Heart left ventricle (tissue), 16 donors: ENCODE measurements at regions of chr3 and their contacts with region 1.

Region 1: DNA sequence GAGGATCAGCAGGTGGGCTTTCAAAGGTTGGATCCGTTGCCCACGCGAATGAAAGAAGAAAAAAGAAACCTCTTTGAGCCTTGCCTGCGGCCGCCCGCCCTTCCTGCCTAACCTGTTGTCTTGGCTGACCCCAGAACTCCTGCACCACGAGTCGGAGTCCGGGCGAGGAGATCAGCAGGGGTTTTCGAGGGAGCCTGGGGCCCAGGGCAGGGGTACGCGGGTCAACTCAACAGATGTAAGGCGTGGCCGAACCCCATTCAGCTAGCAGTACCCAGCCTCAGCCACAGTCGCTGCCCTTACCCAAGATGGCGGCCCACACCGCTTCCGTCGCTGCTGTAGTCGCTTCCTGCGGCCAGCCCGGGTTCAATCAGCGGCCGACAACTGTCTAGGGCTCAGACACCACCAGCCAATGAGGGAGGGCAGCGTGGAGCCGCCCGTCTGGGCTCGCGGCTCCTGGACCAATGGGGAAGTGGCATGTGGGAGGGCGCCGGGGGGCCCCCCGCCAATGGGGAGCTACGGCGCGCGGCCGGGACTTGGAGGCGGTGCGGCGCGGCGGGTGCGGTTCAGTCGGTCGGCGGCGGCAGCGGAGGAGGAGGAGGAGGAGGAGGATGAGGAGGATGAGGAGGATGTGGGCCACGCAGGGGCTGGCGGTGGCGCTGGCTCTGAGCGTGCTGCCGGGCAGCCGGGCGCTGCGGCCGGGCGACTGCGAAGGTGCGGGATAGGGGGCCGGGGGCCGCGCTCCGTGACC is at the start of gene MANF:
- DNase-seq: peak; percentile 98 to 99 (median 99)
- ATAC-seq: peak; percentile 98 to 99 (median 98)
- H3K4me3 ChIP-seq: peak within 1 kb of the TSS; percentile 76 to 97 (median 82)
- H3K27ac ChIP-seq: peak within 1 kb of the TSS; percentile 84 to 97 (median 94)
- H3K4me1 ChIP-seq: peaks cover 12 to 51% (median 37%) of the 10 kb centered on the region in 12 donors
- H3K27me3 ChIP-seq: no peaks in the 10 kb centered on the region
- CTCF ChIP-seq: peak in 3 of 12 donors; percentile 7 to 13 (median 12)
- POLR2A ChIP-seq: peak; percentile 77 to 97
- total RNA-seq, gene MANF: 22.3 to 87.2 (median 47.5) TPM

Region 2: DNA sequence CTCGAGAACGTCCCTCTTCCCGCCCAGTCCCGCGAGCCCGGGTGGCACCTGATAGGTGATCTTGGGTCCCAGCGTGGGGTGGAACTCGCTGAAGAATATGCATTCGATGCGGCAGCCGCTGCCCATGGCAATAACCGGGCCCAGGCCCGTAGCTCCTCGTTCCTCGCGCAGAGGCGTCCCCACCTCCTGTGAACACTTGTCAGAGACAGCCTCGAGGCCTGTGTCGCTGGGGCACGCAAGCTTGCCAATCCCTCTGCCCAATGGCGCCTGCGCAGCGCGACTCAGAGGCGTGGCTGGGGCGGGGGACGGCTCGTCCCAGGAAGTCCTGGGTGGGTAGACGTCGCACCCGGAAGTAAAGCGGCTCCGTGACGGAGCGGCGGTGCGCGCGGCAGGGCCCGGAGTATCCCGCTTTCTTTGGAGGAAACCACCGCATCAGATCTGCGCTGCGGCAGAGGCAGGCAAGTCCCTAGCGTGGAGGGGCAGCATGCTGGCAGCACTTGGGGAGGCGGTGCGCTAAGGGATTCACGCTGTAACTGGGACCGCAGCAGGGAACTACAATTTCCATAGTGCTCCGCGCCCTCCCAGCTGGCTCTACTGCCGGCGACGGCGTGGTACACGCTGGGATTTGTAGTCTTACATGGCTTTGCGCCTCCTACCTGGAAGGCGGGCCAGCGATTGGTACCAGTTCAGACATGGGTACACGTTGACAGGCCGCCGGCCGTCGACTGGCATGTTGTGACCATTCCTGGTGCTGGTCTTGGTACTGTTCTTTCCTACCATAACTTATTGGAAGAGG is 1034.2 kb before region 1 on chr3 and contains the starts of genes CYB561D2 and NPRL2:
- intact Hi-C with region 1: loop called in 2 of 10 experiments (anchors 10 kb)
- DNase-seq: peak; percentile 96 to 99 (median 98)
- ATAC-seq: peak; percentile 88 to 97 (median 96)
- H3K4me3 ChIP-seq: peak within 1 kb of the TSS; percentile 24 to 95 (median 84)
- H3K27ac ChIP-seq: peak within 1 kb of the TSS; percentile 91 to 98 (median 95)
- H3K4me1 ChIP-seq: peaks cover 7 to 63% (median 40%) of the 10 kb centered on the region in 12 donors
- H3K27me3 ChIP-seq: no peaks in the 10 kb centered on the region
- CTCF ChIP-seq: peak in 2 of 12 donors; percentile 5 to 8
- POLR2A ChIP-seq: peak; percentile 58 to 86
- total RNA-seq, gene CYB561D2: 4.9 to 16.5 (median 7.8) TPM
- total RNA-seq, gene NPRL2: 12.0 to 18.4 (median 15.3) TPM

Region 3: DNA sequence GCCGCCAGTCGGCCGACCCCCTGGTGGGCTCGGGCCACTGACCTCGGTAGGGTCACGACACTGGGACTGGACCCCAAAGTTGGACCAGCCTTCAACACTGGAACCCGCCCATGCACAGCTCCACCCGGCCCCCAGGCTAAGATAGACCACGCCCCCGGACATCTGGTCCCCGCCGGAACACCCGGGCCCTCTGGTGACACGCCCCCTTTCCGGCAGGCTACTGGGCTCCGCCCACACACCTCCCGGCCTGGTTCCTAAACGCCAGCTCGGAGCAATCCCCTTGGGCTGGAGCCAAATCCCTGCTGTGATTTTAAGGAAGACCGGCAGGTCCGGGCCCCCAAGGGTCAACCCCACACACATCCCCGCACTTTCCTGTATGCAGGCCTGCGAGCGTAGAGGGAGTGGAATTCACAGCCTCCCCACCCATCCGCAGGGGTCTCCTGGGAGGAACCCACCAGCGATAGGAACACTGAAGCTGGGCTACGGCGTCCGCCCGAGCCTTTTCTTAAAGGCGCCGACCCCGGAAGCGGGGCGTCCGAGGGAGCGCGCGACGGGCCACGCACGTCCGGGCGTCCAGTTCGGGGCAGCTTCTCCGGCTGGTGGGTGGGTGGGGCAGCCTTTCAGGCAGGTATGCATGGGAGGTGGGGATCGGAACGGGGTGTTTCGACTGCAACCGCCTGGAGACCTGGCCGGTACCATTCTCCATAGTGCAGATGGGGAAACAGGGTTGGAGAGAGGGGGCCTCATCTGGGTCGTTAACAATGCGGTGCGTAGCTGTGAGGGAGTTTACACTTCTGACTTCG is 815.8 kb before region 1 on chr3 and contains the start of gene HEMK1:
- intact Hi-C with region 1: loop called in 6 of 10 experiments (anchors 5 to 10 kb)
- DNase-seq: peak; percentile 98 to 99 (median 99)
- ATAC-seq: peak; percentile 87 to 92 (median 89)
- H3K4me3 ChIP-seq: peak within 1 kb of the TSS; percentile 57 to 95 (median 81)
- H3K27ac ChIP-seq: peak within 1 kb of the TSS; percentile 70 to 98 (median 95)
- H3K4me1 ChIP-seq: peaks cover 0 to 66% (median 34%) of the 10 kb centered on the region in 12 donors
- H3K27me3 ChIP-seq: no peaks in the 10 kb centered on the region
- CTCF ChIP-seq: no peak
- POLR2A ChIP-seq: peak in 1 of 2 donors; percentile 34
- total RNA-seq, gene HEMK1: 7.8 to 19.7 (median 13.8) TPM

Region 4: DNA sequence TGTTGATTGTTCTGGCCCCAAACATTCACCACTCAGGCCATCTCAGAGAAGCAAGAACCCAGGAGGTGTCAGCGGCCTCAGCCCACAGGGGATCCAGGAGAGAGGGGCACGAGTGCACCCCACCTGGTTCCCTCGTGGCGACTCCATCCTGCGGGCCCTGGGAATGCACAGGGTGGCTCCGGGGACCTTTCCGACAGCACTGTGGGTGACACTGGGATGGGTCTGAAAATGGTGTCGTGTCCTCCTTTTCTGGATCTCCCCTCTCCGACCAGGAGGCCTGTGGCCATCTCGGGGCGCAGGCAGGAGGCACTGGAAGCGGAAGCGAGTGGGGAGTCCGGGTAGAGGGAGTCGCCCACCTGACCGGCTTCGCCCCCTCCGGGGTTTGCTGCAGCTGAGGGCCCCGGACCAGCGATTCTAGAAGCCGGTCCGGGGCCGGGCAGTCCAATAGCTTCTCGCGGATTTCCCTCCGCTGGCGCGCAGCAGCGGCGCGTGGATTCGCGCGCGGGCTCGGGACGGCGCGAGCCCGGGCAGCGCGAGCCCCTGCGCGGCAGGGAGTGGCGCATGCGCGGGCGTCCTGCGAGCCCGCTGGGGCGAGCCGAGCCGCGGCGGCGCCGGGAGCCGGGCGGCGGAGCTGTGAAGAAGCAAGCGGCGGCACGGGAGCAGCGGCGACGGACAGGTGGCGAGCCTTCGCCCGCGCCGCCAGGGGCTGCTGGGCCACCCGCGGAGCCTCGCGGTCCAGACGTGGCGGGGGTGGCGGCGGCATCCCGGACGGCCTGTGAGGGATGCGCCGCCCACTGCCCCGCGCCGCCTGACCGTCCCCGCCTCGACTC is 710.3 kb before region 1 on chr3 and contains the start of gene DOCK3:
- intact Hi-C with region 1: loop called in 1 of 10 experiments (anchors 10 kb)
- DNase-seq: peak; percentile 41 to 81 (median 62)
- ATAC-seq: peak; percentile 66 to 94 (median 88)
- H3K4me3 ChIP-seq: peak within 1 kb of the TSS; percentile 14 to 82 (median 55)
- H3K27ac ChIP-seq: peak within 1 kb of the TSS in 2 of 12 donors; percentile 42 to 60
- H3K4me1 ChIP-seq: peaks cover 0 to 12% (median 1%) of the 10 kb centered on the region in 12 donors
- H3K27me3 ChIP-seq: peaks cover 2 to 61% (median 34%) of the 10 kb centered on the region in 9 donors
- CTCF ChIP-seq: no peak
- POLR2A ChIP-seq: no peak
- total RNA-seq, gene DOCK3: 2.9 to 6.7 (median 4.8) TPM

Region 5: DNA sequence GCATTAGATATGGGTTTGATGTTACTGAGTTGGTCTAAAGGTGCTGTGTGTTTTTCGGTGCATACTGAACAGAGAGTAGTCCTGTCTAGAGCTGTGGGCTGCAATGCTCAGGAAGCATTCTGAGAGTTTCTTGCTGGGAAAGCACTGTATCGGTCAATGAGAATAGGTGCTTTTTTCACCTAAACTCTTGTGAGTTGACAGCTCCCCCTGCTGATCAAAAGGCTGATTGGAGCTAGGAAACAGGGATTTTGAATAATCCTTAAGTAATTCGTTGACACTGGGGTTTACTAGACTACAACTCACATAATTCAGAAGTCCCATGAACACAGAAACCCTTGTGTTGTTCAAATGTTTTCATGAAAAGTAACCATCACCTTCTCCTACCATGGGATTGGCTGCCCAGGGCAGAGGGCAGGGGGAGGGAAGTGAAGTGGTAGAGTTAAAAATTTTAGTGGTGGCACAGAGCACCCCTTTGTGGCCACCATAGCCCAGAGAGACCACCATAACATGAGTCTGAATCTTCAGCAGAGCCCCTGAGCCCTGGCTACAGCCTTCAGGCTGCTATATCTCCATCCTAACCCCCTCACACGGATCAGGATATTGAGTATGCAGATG is 12.8 kb before region 1 on chr3:
- intact Hi-C with region 1: no loop called
- DNase-seq: no peak
- ATAC-seq: peak in 1 of 4 donors; percentile 17
- H3K4me3 ChIP-seq: no peak overlapping the region
- H3K27ac ChIP-seq: no peak overlapping the region
- H3K4me1 ChIP-seq: no peaks in the 10 kb centered on the region
- H3K27me3 ChIP-seq: no peaks in the 10 kb centered on the region
- CTCF ChIP-seq: peak; percentile 42 to 68 (median 56)
- POLR2A ChIP-seq: no peak

Region 6: DNA sequence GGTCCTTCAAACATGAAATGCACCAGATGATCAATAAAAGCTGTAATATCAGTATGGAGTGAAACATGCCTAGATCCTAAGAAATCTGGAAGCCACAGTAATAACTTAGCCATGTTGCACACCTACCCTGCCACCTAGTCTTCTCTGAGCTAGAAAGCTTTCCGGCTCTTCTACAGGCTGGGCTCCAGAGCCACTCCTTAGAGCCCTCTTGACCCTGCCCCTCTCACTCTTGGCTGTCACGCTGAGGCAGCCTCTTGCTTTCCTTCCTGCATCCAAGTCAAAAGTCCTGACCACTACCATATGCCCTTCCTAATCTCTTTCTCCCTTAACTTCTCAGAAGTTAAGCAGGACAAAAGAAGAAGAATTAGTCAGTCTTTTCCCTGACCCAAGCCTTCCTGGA is 23.9 kb after region 1 on chr3:
- intact Hi-C with region 1: no loop called
- DNase-seq: no peak
- ATAC-seq: no peak
- H3K4me3 ChIP-seq: no peak overlapping the region
- H3K27ac ChIP-seq: no peak overlapping the region
- H3K4me1 ChIP-seq: no peaks in the 10 kb centered on the region
- H3K27me3 ChIP-seq: no peaks in the 10 kb centered on the region
- CTCF ChIP-seq: no peak
- POLR2A ChIP-seq: no peak

Region 7: GRCh38 chr3:51544011-51544775 is 159.3 kb after region 1 on chr3:
- intact Hi-C with region 1: no loop called
- DNase-seq: no peak
- ATAC-seq: no peak
- H3K4me3 ChIP-seq: no peak overlapping the region
- H3K27ac ChIP-seq: no peak overlapping the region
- H3K4me1 ChIP-seq: peaks cover 0 to 23% (median 13%) of the 10 kb centered on the region in 12 donors
- H3K27me3 ChIP-seq: no peaks in the 10 kb centered on the region
- CTCF ChIP-seq: no peak
- POLR2A ChIP-seq: no peak

Region 8: GRCh38 chr3:51682079-51682478 is 297.2 kb after region 1 on chr3:
- intact Hi-C with region 1: loop called in 8 of 10 experiments (anchors 5 to 10 kb)
- DNase-seq: peak; percentile 25 to 81 (median 78)
- ATAC-seq: peak; percentile 71 to 76 (median 72)
- H3K4me3 ChIP-seq: peak overlapping the region in 1 of 12 donors; percentile 17
- H3K27ac ChIP-seq: peak overlapping the region in 10 of 12 donors; percentile 27 to 92 (median 58)
- H3K4me1 ChIP-seq: peaks cover 22 to 93% (median 79%) of the 10 kb centered on the region in 12 donors
- H3K27me3 ChIP-seq: no peaks in the 10 kb centered on the region
- CTCF ChIP-seq: peak; percentile 70 to 83 (median 79)
- POLR2A ChIP-seq: no peak